Dendritic cell treated with granulocyte-macrophage colony-stimulating factor and Interleukin-4, amounts not matched to agents 40 ng/mL and 50 ng/mL, for 4 days (primary cell): ENCODE measurements at regions of chr11 and their contacts with region 1.

Region 1: GRCh38 chr11:109946322-109946846 is 146.8 kb upstream of the ZC3H12C start:
- H3K4me3 Mint-ChIP-seq: no peak overlapping the region
- H3K27ac Mint-ChIP-seq: peak overlapping the region; percentile 81
- H3K4me1 Mint-ChIP-seq: peaks cover 30% of the 10 kb centered on the region
- H3K27me3 Mint-ChIP-seq: no peaks in the 10 kb centered on the region

Region 2: GRCh38 chr11:109828387-109828786 is 118.0 kb before region 1 on chr11:
- intact Hi-C with region 1: no loop called
- H3K4me3 Mint-ChIP-seq: no peak overlapping the region
- H3K27ac Mint-ChIP-seq: no peak overlapping the region
- H3K4me1 Mint-ChIP-seq: no peaks in the 10 kb centered on the region
- H3K27me3 Mint-ChIP-seq: no peaks in the 10 kb centered on the region

Region 3: GRCh38 chr11:109984634-109985289 is 38.4 kb after region 1 on chr11:
- intact Hi-C with region 1: loop called (anchors 5 kb)
- H3K4me3 Mint-ChIP-seq: peak overlapping the region; percentile 11
- H3K27ac Mint-ChIP-seq: no peak overlapping the region
- H3K4me1 Mint-ChIP-seq: peaks cover 20% of the 10 kb centered on the region
- H3K27me3 Mint-ChIP-seq: no peaks in the 10 kb centered on the region

Region 4: GRCh38 chr11:110092515-110093404 is 146.4 kb after region 1 on chr11 and contains the start of gene ZC3H12C:
- intact Hi-C with region 1: loop called (anchors 2 kb)
- H3K4me3 Mint-ChIP-seq: peak within 1 kb of the TSS; percentile 91
- H3K27ac Mint-ChIP-seq: peak within 1 kb of the TSS; percentile 89
- H3K4me1 Mint-ChIP-seq: peaks cover 19% of the 10 kb centered on the region
- H3K27me3 Mint-ChIP-seq: peaks cover 22% of the 10 kb centered on the region

Region 5: DNA sequence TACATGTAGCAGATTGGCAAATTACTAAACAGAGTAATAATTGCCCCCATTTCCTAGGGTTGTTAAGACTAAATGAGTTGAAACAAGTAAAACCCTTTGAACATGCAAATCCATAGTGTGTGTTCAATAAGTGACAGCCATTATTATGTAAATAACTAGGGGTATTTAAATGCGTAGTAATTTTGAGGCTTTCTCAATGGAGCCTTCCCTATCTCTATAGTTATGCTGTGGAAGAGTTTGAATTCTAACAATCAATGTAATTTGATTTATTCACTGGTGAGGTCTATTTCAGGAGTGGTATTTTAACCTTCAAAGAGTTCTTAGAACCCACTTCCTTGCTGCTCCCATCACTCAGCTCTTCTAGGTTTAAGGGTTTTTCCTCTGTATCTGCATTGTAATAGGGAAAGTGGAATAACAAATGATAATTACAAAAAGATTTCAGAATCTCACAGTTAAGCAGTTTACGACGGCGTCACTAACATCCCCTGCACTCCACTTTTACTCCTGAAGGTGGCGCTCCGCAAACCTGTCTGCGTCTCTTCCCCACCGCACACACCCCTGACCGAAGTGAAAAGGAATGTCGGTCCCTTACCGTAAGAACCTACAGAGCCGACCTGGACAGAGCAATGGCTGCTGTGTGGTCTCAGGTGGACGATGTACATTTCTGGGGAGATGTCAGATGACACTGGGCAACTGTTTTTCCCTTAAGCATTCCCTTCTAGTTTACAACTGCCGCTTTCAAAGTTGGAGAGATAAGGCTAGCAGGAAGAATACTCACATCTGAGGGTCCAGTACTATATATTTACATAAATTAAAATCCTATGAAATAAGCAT is 227.6 kb after region 1 on chr11:
- intact Hi-C with region 1: loop called (anchors 10 kb)
- H3K4me3 Mint-ChIP-seq: peak overlapping the region; percentile 61
- H3K27ac Mint-ChIP-seq: no peak overlapping the region
- H3K4me1 Mint-ChIP-seq: peaks cover 7% of the 10 kb centered on the region
- H3K27me3 Mint-ChIP-seq: peaks cover 6% of the 10 kb centered on the region

Region 6: DNA sequence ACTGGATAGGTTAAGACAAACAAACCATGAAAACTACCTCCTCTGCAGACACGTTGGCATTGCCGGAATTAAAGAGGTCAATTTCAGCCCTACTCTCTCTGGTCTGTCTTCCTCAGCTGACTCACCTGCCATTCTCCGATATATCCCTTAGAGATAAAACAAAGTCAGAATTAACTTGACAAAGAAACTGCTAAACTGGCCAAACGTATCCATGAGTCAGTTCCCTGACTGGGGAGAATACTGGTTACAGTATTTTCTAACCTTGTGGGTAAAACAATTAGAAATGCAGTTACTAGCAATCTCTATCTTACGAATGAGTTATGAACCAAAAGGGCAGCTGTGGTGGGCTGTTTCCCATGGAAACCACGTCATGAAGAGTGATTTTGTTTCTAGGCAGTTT is 253.9 kb after region 1 on chr11:
- intact Hi-C with region 1: loop called (anchors 5 kb)
- H3K4me3 Mint-ChIP-seq: no peak overlapping the region
- H3K27ac Mint-ChIP-seq: no peak overlapping the region
- H3K4me1 Mint-ChIP-seq: no peaks in the 10 kb centered on the region
- H3K27me3 Mint-ChIP-seq: peaks cover 1% of the 10 kb centered on the region

Region 7: DNA sequence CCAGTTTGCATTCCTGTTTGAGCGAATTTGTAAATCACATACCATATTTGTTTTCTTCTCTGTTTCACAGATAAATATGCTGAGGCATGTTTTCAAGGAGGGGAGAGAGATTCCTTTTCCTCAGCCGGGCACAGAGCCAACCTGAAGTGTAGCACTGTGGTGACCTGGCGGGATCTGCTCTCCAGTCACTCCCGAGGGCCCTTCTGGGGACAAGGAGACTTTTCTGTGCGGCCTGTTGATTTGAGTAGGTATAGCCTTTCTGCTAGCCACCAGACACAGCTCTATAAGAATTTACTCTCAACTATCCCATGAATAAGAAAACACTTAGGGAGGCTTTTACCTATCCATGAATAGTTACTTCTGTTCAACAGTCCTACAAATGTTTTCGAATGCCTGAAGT is 419.9 kb after region 1 on chr11:
- intact Hi-C with region 1: loop called (anchors 2 kb)
- H3K4me3 Mint-ChIP-seq: no peak overlapping the region
- H3K27ac Mint-ChIP-seq: no peak overlapping the region
- H3K4me1 Mint-ChIP-seq: no peaks in the 10 kb centered on the region
- H3K27me3 Mint-ChIP-seq: no peaks in the 10 kb centered on the region

Region 8: DNA sequence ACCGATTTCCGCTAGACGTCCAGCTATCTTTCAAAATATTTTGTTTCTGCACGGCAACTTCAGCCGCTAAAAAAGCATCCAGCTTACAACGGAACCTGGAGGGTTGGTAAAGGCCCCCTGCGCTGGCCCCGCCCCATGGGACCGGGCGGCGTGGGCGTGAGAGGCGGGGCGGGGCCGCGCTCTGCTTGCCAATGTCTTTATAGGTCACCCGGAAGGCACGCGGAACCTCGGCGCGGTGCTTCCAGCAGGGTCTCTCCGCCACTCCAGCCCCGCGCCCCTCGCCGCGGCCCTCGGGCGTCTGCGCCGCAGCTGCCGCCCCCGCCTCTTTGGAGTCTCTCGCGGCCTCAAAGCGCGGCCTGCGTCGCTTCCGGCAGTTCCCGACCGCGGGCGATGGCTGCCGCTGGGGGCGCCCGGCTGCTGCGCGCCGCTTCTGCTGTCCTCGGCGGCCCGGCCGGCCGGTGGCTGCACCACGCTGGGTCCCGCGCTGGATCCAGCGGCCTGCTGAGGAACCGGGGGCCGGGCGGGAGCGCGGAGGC is 483.4 kb after region 1 on chr11 and contains the start of gene FDX1:
- intact Hi-C with region 1: loop called (anchors 10 kb)
- H3K4me3 Mint-ChIP-seq: peak within 1 kb of the TSS; percentile 94
- H3K27ac Mint-ChIP-seq: peak within 1 kb of the TSS; percentile 95
- H3K4me1 Mint-ChIP-seq: peaks cover 35% of the 10 kb centered on the region
- H3K27me3 Mint-ChIP-seq: no peaks in the 10 kb centered on the region